CD4-positive, alpha-beta T cell (primary cell): ENCODE measurements at regions of chr7 and their contacts with region 1.

Region 1: GRCh38 chr7:7157177-7157886 is 25.0 kb upstream of the C1GALT1 start:
- DNase-seq: peak; percentile 31 to 92 (median 54)
- ATAC-seq: peak; percentile 96
- H3K4me3 ChIP-seq: peak overlapping the region; percentile 35
- H3K4me3 Mint-ChIP-seq: peak overlapping the region; percentile 64
- H3K27ac ChIP-seq: peak overlapping the region; percentile 50 to 72
- H3K27ac Mint-ChIP-seq: peak overlapping the region; percentile 85
- H3K4me1 ChIP-seq: peaks cover 24% of the 10 kb centered on the region
- H3K4me1 Mint-ChIP-seq: peaks cover 71% of the 10 kb centered on the region
- H3K27me3 ChIP-seq: no peaks in the 10 kb centered on the region
- H3K27me3 Mint-ChIP-seq: no peaks in the 10 kb centered on the region
- CTCF ChIP-seq: no peak

Region 2: DNA sequence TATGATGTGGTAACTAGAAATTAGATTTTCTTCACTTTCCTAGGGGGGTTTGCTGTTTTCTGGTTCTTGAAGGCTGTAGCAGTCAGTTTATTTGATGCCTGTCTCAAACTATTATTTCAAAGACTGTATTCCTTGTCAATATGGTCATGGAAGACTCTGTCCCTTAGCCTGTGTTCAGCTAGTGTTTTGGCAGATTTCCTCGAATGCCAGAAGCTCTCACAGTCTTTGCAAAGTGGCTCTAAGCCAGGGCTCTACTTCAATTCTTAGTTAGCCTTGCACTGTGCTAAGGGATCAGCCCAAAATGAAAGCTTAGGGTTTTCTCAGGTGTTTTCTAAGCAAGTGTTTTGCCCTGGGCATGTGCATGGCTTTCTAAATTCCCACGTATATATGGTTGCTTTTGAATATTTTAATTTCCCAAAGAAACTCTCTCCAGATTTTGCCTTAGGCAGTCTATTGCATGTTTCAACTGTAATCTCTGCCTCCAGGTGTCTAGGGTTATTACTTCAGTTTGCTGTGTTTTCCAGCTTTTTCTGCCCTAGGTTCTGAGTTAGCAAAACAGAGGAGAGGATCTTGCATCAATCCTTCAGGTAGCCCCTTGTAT is 17.8 kb after region 1 on chr7:
- CTCF ChIA-PET with region 1: no interaction called
- POLR2A ChIA-PET with region 1: interaction called, 10 read pairs
- intact Hi-C with region 1: loop called in 1 of 2 experiments (anchors 2 kb)
- DNase-seq: no peak
- ATAC-seq: no peak
- H3K4me3 ChIP-seq: no peak overlapping the region
- H3K4me3 Mint-ChIP-seq: no peak overlapping the region
- H3K27ac ChIP-seq: no peak overlapping the region
- H3K27ac Mint-ChIP-seq: no peak overlapping the region
- H3K4me1 ChIP-seq: no peaks in the 10 kb centered on the region
- H3K4me1 Mint-ChIP-seq: peaks cover 38% of the 10 kb centered on the region
- H3K27me3 ChIP-seq: no peaks in the 10 kb centered on the region
- H3K27me3 Mint-ChIP-seq: no peaks in the 10 kb centered on the region
- CTCF ChIP-seq: no peak

Region 3: DNA sequence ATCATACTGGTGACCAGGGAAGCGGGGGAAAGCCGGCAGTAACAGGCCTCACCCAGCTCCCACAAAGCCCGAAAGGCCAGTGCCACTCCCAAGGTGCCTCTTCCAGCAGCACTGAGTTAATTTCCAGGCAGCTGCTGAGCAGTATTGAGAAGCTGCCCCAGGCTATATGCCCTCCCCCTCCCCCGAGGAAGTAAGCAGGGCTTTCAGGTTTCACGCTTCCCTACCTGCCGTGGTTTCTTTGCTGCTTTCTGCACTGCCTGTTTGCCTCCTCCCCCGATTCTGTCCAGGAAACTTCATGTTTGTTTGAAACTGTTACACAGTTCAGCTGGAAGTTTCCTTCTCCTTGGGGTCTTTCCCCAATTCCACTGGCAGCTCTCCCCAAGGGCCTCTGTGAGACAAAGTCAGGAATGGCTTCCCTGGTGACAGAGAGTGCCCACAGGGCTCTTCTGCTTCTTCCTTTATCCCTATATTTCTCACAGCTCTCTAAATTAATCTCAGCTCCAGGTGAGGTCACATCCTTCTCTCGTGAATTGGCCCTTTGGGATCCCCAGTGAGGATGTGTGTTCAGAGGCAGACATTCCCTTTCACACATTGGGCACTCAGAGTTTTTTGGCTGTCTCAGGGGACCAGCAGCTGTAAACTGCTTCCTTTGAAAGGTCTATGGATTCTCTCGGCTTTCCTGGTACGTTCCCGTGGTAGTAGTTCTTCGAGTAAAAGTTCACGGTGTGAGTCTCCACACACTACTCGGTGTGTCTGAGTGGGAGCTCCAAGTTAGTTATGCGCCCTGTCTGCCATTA is 44.4 kb after region 1 on chr7:
- CTCF ChIA-PET with region 1: no interaction called
- POLR2A ChIA-PET with region 1: interaction called, 5 read pairs
- intact Hi-C with region 1: loop called in 1 of 2 experiments (anchors 10 kb)
- DNase-seq: peak; percentile 14 to 69 (median 32)
- ATAC-seq: peak; percentile 95
- H3K4me3 ChIP-seq: peak overlapping the region; percentile 17
- H3K4me3 Mint-ChIP-seq: peak overlapping the region; percentile 54
- H3K27ac ChIP-seq: peak overlapping the region; percentile 13 to 21
- H3K27ac Mint-ChIP-seq: peak overlapping the region; percentile 80
- H3K4me1 ChIP-seq: peaks cover 15% of the 10 kb centered on the region
- H3K4me1 Mint-ChIP-seq: peaks cover 90% of the 10 kb centered on the region
- H3K27me3 ChIP-seq: no peaks in the 10 kb centered on the region
- H3K27me3 Mint-ChIP-seq: no peaks in the 10 kb centered on the region
- CTCF ChIP-seq: no peak

Region 4: DNA sequence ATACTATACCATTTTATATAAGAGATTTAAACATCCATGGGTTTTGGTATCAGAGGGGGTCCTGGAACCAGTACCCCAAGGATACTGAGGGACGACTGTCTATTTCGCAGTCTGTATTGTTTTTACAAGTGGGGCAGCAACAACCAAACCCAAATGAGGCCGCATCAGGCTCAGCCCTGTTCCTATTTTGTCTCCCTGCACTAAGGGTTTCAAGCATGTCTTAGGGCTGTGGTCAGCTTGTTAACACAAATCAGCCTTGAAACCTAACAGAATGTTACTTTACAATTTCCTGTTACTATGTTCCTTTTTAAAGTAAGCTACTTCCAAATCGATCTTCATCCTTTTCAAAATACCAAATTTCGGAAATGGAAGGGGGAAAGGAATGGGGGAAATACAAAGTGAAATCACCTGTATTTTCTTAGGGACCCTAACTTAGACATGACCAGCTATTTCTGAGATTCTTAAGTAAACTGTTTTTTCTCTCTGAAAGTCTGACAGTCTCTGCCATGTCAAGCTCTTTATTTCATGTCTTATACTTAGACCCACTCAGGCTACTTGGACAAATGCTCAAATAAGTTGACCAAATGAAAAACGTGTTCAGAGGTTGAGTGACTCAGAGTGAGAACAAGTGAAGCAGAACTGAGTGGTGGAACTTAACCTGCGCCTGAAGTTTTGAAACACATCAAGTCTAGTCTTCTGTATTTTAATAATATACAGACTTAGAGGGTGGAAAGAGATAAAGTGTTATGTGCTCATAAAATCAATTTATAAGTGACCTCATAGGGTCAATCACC is 100.8 kb after region 1 on chr7:
- CTCF ChIA-PET with region 1: no interaction called
- POLR2A ChIA-PET with region 1: interaction called, 14 read pairs
- intact Hi-C with region 1: no loop called
- DNase-seq: peak in 3 of 14 experiments; percentile 41 to 50 (median 47)
- ATAC-seq: peak; percentile 42
- H3K4me3 ChIP-seq: peak overlapping the region; percentile 49
- H3K4me3 Mint-ChIP-seq: peak overlapping the region; percentile 78
- H3K27ac ChIP-seq: peak overlapping the region; percentile 24 to 78
- H3K27ac Mint-ChIP-seq: peak overlapping the region; percentile 76
- H3K4me1 ChIP-seq: peaks cover 18% of the 10 kb centered on the region
- H3K4me1 Mint-ChIP-seq: peaks cover 44% of the 10 kb centered on the region
- H3K27me3 ChIP-seq: no peaks in the 10 kb centered on the region
- H3K27me3 Mint-ChIP-seq: no peaks in the 10 kb centered on the region
- CTCF ChIP-seq: no peak

Region 5: DNA sequence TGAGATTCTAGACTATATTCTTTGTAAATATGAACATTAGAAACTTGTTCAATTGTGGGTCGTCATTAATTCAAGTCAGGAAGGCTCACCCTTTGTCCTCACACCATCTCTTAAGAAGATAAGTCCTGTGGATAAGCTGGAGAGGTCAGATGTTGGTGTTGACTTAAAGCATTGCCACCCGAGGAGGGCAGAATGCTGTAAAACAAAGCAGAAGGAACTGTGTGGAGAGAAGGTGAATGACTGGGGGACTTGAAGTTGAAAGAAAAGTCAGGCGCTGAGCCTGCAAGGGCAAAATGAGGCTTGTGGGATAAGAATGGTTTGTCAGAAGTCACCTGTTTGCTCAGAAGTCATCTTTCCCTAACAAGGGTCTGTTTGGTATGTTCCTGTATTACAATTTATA is 551.9 kb after region 1 on chr7:
- CTCF ChIA-PET with region 1: no interaction called
- POLR2A ChIA-PET with region 1: no interaction called
- intact Hi-C with region 1: no loop called
- DNase-seq: no peak
- ATAC-seq: no peak
- H3K4me3 ChIP-seq: no peak overlapping the region
- H3K4me3 Mint-ChIP-seq: no peak overlapping the region
- H3K27ac ChIP-seq: no peak overlapping the region
- H3K27ac Mint-ChIP-seq: no peak overlapping the region
- H3K4me1 ChIP-seq: no peaks in the 10 kb centered on the region
- H3K4me1 Mint-ChIP-seq: peaks cover 23% of the 10 kb centered on the region
- H3K27me3 ChIP-seq: no peaks in the 10 kb centered on the region
- H3K27me3 Mint-ChIP-seq: no peaks in the 10 kb centered on the region
- CTCF ChIP-seq: no peak